Common myeloid progenitor, CD34-positive (primary cell): ENCODE measurements at regions of chr10 and their contacts with region 1.

Region 1: GRCh38 chr10:112461029-112461887 is 14.2 kb downstream of the VTI1A start:
- DNase-seq: no peak
- H3K4me3 ChIP-seq: no peak overlapping the region
- H3K27ac ChIP-seq: no peak overlapping the region
- H3K4me1 ChIP-seq: no peaks in the 10 kb centered on the region
- H3K27me3 ChIP-seq: no peaks in the 10 kb centered on the region

Region 2: GRCh38 chr10:112394475-112394875 is 66.8 kb before region 1 on chr10:
- CTCF ChIA-PET with region 1: no interaction called
- POLR2A ChIA-PET with region 1: no interaction called
- DNase-seq: peak in 2 of 3 donors; percentile 10 to 13
- H3K4me3 ChIP-seq: no peak overlapping the region
- H3K27ac ChIP-seq: no peak overlapping the region
- H3K4me1 ChIP-seq: peaks cover 0 to 10% (median 4%) of the 10 kb centered on the region in 4 experiments
- H3K27me3 ChIP-seq: no peaks in the 10 kb centered on the region

Region 3: GRCh38 chr10:112471878-112472487 is 10.7 kb after region 1 on chr10:
- CTCF ChIA-PET with region 1: interaction called, 13 read pairs
- POLR2A ChIA-PET with region 1: no interaction called
- DNase-seq: peak; percentile 49 to 78 (median 77)
- H3K4me3 ChIP-seq: no peak overlapping the region
- H3K27ac ChIP-seq: no peak overlapping the region
- H3K4me1 ChIP-seq: peaks cover 0 to 2% (median 0%) of the 10 kb centered on the region in 4 experiments
- H3K27me3 ChIP-seq: no peaks in the 10 kb centered on the region